IMR-90 (cell line): ENCODE measurements at regions of chr3 and their contacts with region 1.

Region 1: GRCh38 chr3:72932416-72932815 is 44.6 kb downstream of the GXYLT2 start:
- DNase-seq: no peak
- ATAC-seq: no peak
- H3K4me3 ChIP-seq: no peak overlapping the region
- H3K27ac ChIP-seq: no peak overlapping the region
- H3K4me1 ChIP-seq: no peaks in the 10 kb centered on the region
- H3K27me3 ChIP-seq: no peaks in the 10 kb centered on the region
- CTCF ChIP-seq: no peak
- POLR2A ChIP-seq: no peak
- RAD21 ChIP-seq: no peak

Region 2: DNA sequence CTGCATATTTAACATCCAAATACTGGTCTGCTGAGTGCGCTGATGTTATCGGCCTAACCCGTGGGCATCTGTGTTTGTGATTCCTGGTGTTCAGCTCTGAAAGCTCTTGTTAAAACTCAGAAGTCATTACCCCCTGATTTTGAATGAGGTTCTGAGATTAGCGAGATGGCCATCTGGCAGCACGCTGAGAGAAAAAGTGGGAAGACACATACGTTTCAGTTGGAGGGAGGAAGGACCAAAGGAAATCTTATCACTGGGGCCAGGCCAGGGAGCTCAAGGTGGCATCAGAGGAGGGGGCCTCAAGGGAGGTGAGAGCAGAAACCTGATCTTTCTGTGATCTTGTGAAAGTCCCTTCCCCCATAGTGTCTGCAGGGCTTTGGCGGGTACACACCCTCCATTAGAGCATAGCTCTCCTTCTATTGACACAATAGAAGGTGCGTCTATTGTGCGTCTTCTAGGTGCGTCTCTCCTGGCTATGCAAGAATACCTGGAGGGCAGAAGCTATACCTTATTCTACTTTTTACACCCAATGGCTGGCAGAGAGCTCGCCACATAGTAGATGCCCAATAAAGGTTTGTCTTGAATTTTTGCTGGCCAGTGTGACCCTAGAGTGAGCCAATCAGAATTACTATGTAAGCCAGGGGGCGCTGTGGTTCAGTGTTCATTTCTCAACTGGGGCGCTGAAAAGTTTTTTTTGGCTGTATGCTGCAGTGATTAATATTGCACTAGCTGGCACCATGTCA is 266.5 kb before region 1 on chr3:
- CTCF ChIA-PET with region 1: no interaction called
- POLR2A ChIA-PET with region 1: no interaction called
- dilution Hi-C with region 1: no loop called
- in situ Hi-C with region 1: no loop called
- intact Hi-C with region 1: loop called (anchors 5 kb)
- DNase-seq: no peak
- ATAC-seq: no peak
- H3K4me3 ChIP-seq: no peak overlapping the region
- H3K27ac ChIP-seq: no peak overlapping the region
- H3K4me1 ChIP-seq: no peaks in the 10 kb centered on the region
- H3K27me3 ChIP-seq: peaks cover 1% of the 10 kb centered on the region; the same call in 1 of the 2 replicates
- CTCF ChIP-seq: peak; percentile 38
- POLR2A ChIP-seq: no peak
- RAD21 ChIP-seq: peak; percentile 32; the same call in 1 of the 2 replicates

Region 3: GRCh38 chr3:72960812-72961518 is 28.5 kb after region 1 on chr3:
- CTCF ChIA-PET with region 1: no interaction called
- POLR2A ChIA-PET with region 1: no interaction called
- dilution Hi-C with region 1: no loop called
- in situ Hi-C with region 1: no loop called
- intact Hi-C with region 1: no loop called
- DNase-seq: peak; percentile 74
- ATAC-seq: peak; percentile 77
- H3K4me3 ChIP-seq: no peak overlapping the region
- H3K27ac ChIP-seq: no peak overlapping the region
- H3K4me1 ChIP-seq: no peaks in the 10 kb centered on the region
- H3K27me3 ChIP-seq: no peaks in the 10 kb centered on the region
- CTCF ChIP-seq: no peak
- POLR2A ChIP-seq: no peak
- RAD21 ChIP-seq: no peak